Dendritic cell treated with granulocyte-macrophage colony-stimulating factor and Interleukin-4, amounts not matched to agents 40 ng/mL and 50 ng/mL, for 4 days (primary cell): ENCODE measurements at regions of chr2 and their contacts with region 1.

Region 1: GRCh38 chr2:37344453-37345361 is at the start of gene QPCT:
- H3K4me3 Mint-ChIP-seq: peak within 1 kb of the TSS; percentile 86
- H3K27ac Mint-ChIP-seq: peak within 1 kb of the TSS; percentile 88
- H3K4me1 Mint-ChIP-seq: peaks cover 64% of the 10 kb centered on the region
- H3K27me3 Mint-ChIP-seq: no peaks in the 10 kb centered on the region

Region 2: GRCh38 chr2:37324786-37325624 is 19.7 kb before region 1 on chr2 and contains the start of gene PRKD3:
- intact Hi-C with region 1: loop called (anchors 1 kb)
- H3K4me3 Mint-ChIP-seq: peak within 1 kb of the TSS; percentile 91
- H3K27ac Mint-ChIP-seq: peak within 1 kb of the TSS; percentile 78
- H3K4me1 Mint-ChIP-seq: peaks cover 31% of the 10 kb centered on the region
- H3K27me3 Mint-ChIP-seq: no peaks in the 10 kb centered on the region

Region 3: GRCh38 chr2:37357530-37357929 is 12.8 kb after region 1 on chr2:
- intact Hi-C with region 1: no loop called
- H3K4me3 Mint-ChIP-seq: no peak overlapping the region
- H3K27ac Mint-ChIP-seq: peak overlapping the region; percentile 43
- H3K4me1 Mint-ChIP-seq: peaks cover 48% of the 10 kb centered on the region
- H3K27me3 Mint-ChIP-seq: no peaks in the 10 kb centered on the region

Region 4: DNA sequence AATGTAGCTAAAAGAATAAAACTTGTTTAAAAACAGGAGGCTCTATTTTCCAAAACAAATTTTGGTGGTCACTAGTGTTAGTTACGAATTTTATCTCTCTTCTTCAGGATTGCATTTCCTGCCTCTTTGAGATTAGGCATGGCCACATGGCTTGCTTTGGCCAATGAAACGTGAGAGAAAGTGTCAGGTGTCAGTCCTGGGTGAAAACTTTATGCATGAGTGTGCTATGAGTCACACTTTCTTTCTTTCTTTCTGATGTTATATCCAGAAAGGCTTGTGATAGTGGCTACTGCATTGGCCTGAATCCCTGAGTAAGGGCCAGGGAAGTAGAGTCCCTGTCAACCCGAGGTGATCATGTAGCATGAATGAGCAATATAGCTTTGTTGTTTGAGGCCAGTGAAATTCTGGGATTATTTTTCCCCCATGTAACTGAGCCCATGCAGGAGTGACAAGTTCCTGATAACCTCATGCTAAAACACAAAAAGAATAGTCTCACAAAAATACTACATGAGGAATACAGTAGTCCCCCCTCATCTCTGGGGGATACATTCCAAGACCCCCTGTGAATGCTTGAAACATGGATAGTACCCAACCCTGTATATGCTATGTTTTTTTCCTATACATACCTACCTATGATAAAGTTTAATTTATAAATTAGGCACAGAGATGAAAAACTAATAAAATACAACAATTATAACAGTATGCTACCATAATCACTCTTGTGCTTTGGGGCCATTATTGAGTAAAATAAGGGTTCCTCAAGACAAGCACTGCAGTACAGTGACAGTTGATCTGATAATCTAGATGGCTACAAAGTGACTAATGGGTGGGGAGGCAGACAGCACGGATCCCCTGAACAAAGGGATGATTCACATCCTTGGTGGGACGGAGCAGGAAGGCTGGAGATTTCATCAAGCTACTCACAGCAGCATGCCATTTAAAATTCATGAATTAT is 217.2 kb after region 1 on chr2:
- intact Hi-C with region 1: no loop called
- H3K4me3 Mint-ChIP-seq: no peak overlapping the region
- H3K27ac Mint-ChIP-seq: no peak overlapping the region
- H3K4me1 Mint-ChIP-seq: peaks cover 57% of the 10 kb centered on the region
- H3K27me3 Mint-ChIP-seq: no peaks in the 10 kb centered on the region